Pancreas (tissue), 10 donors: ENCODE measurements at regions of chr2 and their contacts with region 1.

Region 1: DNA sequence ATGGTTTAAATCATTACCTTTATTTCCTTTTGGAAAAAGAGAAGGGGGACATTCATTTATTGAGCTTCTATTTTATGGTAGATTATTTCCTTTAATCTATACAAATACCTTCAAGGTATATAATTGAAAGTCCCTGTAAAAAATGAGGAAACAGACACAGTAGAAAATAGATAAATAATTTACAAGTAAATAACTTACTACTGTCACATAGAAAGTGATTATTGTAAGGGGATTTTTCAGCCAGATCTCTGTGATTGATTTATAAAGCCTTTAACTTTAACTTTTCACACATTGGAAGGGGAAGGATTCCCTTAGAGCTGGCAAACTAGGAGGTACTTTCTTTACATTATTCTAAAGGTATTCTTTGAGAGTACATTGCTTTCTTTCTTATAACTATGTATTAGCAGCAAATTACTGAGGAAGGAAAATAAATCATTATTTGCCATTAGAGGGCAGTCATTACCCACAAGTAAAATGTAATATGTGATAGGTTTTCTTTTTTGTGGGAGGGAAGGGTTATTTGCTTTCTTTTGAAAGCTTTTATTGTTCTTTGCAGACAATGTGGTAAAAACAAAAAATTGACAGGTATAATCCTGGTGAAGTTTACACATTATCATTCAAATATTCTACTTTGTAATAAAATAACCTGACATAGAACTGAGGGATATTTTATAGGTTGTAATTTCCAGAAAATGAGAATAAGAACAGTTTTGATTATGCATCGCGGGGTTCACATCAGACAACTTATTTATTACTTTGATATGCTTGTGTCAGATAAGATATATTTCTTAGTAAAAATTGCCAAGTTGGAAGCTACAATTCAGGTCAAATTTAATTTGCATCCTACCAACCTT is 24.8 kb upstream of the RPE start:
- DNase-seq: no peak
- ATAC-seq: peak; percentile 43 to 80 (median 78)
- H3K4me3 ChIP-seq: no peak overlapping the region
- H3K27ac ChIP-seq: no peak overlapping the region
- H3K4me1 ChIP-seq: no peaks in the 10 kb centered on the region
- H3K27me3 ChIP-seq: no peaks in the 10 kb centered on the region
- CTCF ChIP-seq: peak in 3 of 4 donors; percentile 26 to 46 (median 41)

Region 2: GRCh38 chr2:210195101-210195852 is 217.7 kb after region 1 on chr2:
- intact Hi-C with region 1: loop called (anchors 5 to 10 kb)
- DNase-seq: no peak
- ATAC-seq: peak; percentile 76 to 89 (median 86)
- H3K4me3 ChIP-seq: peak overlapping the region in 2 of 4 donors; percentile 22 to 33
- H3K27ac ChIP-seq: peak overlapping the region in 2 of 4 donors; percentile 15
- H3K4me1 ChIP-seq: peaks cover 13 to 21% (median 19%) of the 10 kb centered on the region in 3 donors
- H3K27me3 ChIP-seq: no peaks in the 10 kb centered on the region
- CTCF ChIP-seq: peak; percentile 32 to 71 (median 50)

Region 3: GRCh38 chr2:210203157-210203947 is 225.7 kb after region 1 on chr2:
- intact Hi-C with region 1: loop called (anchors 5 to 10 kb)
- DNase-seq: no peak
- ATAC-seq: no peak
- H3K4me3 ChIP-seq: no peak overlapping the region
- H3K27ac ChIP-seq: peak overlapping the region in 1 of 4 donors; percentile 13
- H3K4me1 ChIP-seq: no peaks in the 10 kb centered on the region
- H3K27me3 ChIP-seq: no peaks in the 10 kb centered on the region
- CTCF ChIP-seq: no peak